Aorta (tissue), 5 donors: ENCODE measurements at regions of chr7 and their contacts with region 1.

Region 1: DNA sequence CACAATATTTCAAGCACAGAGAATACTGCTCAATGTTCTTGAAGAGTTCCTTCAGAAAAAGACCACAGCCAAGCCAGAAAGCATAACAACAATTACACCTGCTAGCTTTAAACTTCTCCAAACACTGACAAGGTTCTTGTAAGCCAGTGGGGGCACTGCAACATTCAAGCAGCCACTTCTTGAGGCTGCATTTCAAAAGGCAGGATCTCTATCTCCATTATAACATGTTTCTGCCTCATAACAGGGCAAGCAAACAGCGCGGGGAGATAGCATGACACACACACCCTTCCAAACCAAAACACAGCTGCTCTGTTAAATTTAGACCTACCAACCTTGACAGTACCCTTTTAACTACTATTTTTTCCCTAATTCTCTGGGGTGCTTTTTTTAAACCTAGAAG is 30.8 kb downstream of the CHCHD3 start:
- DNase-seq: no peak
- ATAC-seq: peak; percentile 27
- H3K4me3 ChIP-seq: no peak overlapping the region
- H3K27ac ChIP-seq: no peak overlapping the region
- H3K4me1 ChIP-seq: peaks cover 0 to 19% of the 10 kb centered on the region in 2 donors
- H3K27me3 ChIP-seq: no peaks in the 10 kb centered on the region

Region 2: DNA sequence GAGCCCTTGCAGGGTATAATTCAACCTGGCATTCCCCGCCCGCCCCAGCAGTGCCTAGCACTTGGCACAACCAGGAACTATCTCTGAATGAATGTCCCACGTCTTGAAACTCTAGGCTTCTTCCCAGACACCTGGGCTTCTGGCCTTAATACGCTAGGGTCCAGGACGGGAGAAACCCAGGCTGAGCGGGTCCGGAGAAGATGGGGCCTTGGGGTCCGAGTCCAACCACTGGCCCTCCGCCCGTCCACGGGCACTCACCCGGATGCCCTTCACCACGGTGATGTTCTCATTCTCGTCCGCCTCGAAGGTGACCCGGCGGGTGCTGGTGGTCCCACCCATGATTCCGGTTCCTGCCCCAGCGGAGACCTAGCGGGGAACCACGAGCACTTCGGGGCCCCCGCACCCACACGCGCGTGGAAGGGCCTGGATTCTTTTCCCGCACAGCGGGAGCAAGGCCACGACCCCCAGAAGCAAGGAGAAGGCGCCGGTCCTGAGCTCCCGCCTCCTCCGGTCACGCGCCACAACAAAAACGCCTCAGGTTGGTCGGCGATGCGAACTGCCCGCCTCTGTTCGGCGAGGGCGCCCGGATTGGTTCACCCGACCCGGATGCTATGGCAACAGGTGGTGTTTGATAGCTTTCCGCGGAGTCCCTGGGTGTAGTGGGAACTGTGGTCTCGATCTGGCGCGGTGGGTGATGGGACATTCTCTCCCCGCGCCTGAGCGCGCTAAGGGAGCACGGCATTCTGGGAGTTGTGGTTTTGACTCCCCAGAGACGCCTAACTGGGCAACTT is 30.7 kb after region 1 on chr7 and contains the start of gene CHCHD3:
- intact Hi-C with region 1: loop called (anchors 1 to 2 kb)
- DNase-seq: peak; percentile 98 to 99
- ATAC-seq: peak; percentile 100
- H3K4me3 ChIP-seq: peak within 1 kb of the TSS; percentile 58 to 70
- H3K27ac ChIP-seq: peak within 1 kb of the TSS in 1 of 2 donors; percentile 26
- H3K4me1 ChIP-seq: no peaks in the 10 kb centered on the region
- H3K27me3 ChIP-seq: no peaks in the 10 kb centered on the region
- total RNA-seq, gene CHCHD3: 32.2 to 39.9 TPM